ENCODE measurements at regions of chr3 and their contacts with region 1.

Region 1: DNA sequence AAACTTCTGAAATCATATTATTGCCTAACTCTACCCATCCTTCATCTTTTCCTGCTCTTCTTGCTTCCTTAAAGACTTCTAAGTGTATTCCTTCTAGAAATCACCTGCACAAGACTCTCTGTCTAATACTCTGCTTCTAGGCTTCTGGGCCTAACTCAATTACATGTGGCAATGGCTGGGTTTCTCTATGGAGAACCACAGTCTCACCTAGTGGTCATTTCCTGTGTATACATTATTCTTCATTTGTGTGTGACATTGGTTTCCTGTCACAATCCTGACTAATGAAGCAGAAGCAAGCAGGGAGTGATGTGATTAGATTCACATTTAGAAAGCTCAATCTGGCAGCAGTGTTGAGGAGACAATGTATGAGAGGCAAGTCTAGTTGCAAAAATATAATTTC is 16.9 kb upstream of the CLDN1 start:
- DNase-seq: peak; percentile 95
- H3K4me3 ChIP-seq: no peak overlapping the region
- H3K27ac ChIP-seq: peak overlapping the region; percentile 75
- H3K4me1 ChIP-seq: peaks cover 28% of the 10 kb centered on the region
- H3K27me3 ChIP-seq: no peaks in the 10 kb centered on the region
- CTCF ChIP-seq: peak; percentile 51

Region 2: DNA sequence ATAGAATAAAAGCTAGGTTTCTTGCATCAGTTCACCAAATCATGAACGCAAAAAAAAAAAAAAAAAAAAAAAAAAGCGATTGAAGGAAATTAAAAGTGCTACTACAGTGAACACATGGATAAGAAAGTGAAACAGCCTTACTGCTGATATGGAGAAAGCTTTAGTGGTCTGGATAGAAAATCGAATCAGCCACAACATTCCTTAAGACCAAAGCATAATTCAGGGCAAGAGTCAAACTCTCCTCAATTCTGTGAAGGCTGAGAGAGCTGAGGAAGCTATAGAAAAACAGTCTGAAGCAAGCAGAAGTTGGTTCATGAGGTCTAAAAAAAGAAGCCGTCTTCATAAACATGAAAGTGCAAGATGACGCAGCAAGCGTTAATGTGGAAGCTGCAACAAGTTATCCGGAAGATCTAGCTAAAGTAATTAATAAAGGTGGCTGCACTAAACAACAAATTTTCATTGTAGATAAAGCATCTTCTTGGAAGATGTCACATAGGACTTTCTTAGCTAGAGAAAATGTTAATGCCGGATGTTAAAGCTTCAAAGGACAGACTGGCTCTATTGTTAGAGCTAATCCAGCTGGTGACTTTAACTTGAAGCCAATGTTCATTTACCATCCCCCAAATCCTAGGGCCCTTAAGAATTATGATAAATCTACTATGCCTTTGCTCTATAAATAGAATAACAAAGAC is 237.7 kb before region 1 on chr3:
- CTCF ChIA-PET with region 1: no interaction called
- POLR2A ChIA-PET with region 1: no interaction called
- intact Hi-C with region 1: loop called (anchors 10 kb)
- DNase-seq: peak; percentile 68
- H3K4me3 ChIP-seq: peak overlapping the region; percentile 18
- H3K27ac ChIP-seq: peak overlapping the region; percentile 79
- H3K4me1 ChIP-seq: peaks cover 60% of the 10 kb centered on the region
- H3K27me3 ChIP-seq: no peaks in the 10 kb centered on the region
- CTCF ChIP-seq: no peak